HEK293 (cell line): ENCODE measurements at regions of chr19 and their contacts with region 1.

Region 1: DNA sequence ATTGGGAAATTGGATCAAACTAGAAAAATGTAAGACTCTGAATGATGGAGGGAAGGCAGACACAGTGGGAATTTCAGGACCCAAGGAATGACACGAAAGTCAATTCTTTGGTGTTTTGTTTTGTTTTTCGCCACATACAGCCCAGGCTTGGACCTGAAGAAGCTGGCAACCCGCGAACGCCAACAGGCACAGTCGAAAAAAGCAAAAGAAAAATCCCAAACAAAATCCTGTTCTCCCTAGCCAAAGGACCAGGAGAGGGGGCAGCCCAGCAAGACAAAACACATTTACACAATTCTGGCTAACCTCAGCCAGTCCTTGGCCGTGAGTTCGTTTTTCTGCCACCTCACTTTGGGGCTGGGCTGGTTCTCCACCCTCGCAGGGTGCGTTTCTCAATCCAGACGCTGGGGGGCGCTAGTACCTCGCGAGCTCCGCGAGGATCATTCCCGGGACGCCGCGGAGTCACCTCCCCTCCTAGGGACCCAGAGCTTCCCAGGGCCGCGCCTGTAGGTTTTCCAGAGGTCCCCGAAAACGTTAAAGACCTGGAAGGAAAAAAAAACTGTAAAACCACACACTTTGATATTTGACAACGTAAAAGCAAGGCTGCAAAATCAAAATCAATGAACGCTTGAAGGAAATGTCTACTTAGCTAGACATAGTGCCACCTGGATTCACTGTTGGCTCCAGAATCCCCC is 34.9 kb upstream of the TPM4 start:
- H3K4me3 ChIP-seq: no peak overlapping the region
- H3K27ac ChIP-seq: no peak overlapping the region
- H3K4me1 ChIP-seq: no peaks in the 10 kb centered on the region
- CTCF ChIP-seq: peak; percentile 76

Region 2: DNA sequence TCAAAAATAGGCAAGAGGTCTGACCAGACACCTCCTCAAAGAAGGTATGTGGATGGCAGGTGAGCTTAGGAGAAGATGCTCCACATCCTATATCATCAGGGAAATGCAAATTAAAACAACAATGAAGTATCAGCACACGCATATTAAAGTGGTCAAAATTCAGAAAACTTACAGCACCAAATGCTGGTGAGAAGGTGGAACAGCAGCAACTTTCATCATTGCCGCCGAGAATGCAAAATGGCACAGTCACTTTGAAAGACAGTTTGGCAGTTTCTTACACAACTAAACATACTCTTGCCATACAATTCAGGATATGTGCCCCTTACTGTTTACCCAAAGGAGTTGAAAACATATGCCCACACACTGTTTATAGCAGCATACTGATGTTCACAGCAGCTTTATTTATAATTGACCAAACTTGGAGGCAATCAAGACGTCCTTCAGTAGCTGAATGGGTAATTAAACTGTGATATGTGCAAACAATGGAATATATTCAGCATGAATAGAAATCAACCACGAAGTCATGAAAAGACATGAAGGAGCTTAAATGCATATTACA is 70.1 kb before region 1 on chr19:
- CTCF ChIA-PET with region 1: no interaction called
- POLR2A ChIA-PET with region 1: no interaction called
- H3K4me3 ChIP-seq: no peak overlapping the region
- H3K27ac ChIP-seq: no peak overlapping the region
- H3K4me1 ChIP-seq: no peaks in the 10 kb centered on the region
- CTCF ChIP-seq: no peak

Region 3: GRCh38 chr19:16062789-16063188 is 21.3 kb after region 1 on chr19:
- CTCF ChIA-PET with region 1: interaction called, 10 read pairs
- POLR2A ChIA-PET with region 1: no interaction called
- H3K4me3 ChIP-seq: no peak overlapping the region
- H3K27ac ChIP-seq: no peak overlapping the region
- H3K4me1 ChIP-seq: no peaks in the 10 kb centered on the region
- CTCF ChIP-seq: peak; percentile 40; the same call in 1 of the 2 replicates

Region 4: DNA sequence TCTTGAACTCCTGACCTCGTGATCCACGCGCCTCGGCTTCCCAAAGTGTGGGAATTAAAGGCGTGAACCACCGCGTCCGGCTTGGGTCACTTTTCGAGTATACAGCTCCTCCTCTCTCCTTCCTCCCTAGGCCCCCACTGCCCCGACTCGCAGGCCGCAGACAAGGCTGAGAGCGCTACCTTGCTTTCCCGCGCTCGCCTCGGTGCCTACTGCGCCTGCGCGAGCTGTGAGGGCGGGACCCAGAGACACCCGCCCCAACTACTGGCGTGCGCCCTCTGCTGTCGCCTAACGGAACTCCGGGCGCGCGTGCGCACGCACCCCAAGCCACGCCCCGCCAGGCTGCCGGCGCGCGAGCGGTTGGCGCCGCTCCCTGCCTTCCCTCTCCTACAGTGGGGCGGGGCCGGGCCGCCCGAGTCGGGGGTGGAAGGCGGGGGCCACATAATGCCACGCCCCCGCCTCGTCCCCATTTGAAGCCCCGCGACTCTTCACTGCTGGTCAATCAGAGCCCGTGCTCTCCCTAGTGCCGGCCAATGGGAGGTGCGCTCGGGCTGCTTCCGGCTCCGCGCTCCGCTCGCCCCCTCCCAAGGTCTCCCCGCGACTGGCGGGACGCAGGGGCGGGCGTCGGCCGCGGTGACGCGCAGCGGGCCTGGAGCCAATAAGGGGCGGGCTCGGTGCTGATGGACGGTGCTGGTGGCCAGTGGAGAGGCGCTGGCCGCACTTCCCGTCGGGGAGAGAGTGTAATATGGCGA is 69.9 kb after region 1 on chr19 and contains the start of gene RAB8A:
- CTCF ChIA-PET with region 1: interaction called, 13 read pairs
- POLR2A ChIA-PET with region 1: interaction called, 4 read pairs
- H3K4me3 ChIP-seq: peak within 1 kb of the TSS; percentile 98
- H3K27ac ChIP-seq: peak within 1 kb of the TSS; percentile 59; the same call in 1 of the 2 replicates
- H3K4me1 ChIP-seq: peaks cover 4% of the 10 kb centered on the region; the same call in 1 of the 2 replicates
- CTCF ChIP-seq: peak; percentile 98

Region 5: DNA sequence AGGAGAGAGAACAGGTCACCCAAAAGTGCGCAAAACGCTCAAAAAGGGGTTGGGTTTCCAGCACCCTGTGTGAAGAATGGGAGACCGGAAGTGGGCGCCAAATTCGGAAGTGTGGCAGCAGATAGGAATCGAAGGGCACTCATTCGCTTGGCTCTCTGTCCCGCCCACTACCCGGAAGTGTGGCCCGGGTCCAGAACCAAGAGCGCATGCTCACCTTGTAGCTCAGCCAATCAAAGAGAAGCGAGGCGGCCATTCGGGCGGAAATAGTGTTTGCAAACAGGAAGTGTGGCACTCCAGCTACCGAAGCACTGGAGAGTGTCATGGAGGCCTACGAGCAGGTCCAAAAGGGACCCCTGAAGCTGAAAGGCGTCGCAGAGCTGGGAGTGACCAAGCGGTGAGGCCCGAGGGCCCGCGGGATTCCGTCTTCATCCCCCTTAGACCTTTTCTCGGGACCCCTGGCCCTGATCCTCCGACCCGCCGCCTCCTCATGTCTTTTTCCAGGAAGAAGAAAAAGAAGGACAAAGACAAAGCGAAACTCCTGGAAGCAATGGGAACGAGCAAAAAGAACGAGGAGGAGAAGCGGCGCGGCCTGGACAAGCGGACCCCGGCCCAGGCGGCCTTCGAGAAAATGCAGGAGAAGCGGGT is 143.8 kb after region 1 on chr19 and contains the start of gene FAM32A:
- CTCF ChIA-PET with region 1: interaction called, 18 read pairs
- POLR2A ChIA-PET with region 1: interaction called, 5 read pairs
- H3K4me3 ChIP-seq: peak within 1 kb of the TSS; percentile 79
- H3K27ac ChIP-seq: peak within 1 kb of the TSS; percentile 48
- H3K4me1 ChIP-seq: no peaks in the 10 kb centered on the region
- CTCF ChIP-seq: no peak